ENCODE measurements at regions of chr16 and their contacts with region 1.

Region 1: GRCh38 chr16:7182510-7183109 is 150.0 kb upstream of the RBFOX1 start:
- DNase-seq: peak; percentile 41

Region 2: GRCh38 chr16:6704306-6704930 is 478.2 kb before region 1 on chr16:
- in situ Hi-C with region 1: loop called (anchors 25 kb)
- DNase-seq: no peak

Measured in ACHN (cell line).